Pancreas (tissue), 10 donors: ENCODE measurements at regions of chr20 and their contacts with region 1.

Region 1: DNA sequence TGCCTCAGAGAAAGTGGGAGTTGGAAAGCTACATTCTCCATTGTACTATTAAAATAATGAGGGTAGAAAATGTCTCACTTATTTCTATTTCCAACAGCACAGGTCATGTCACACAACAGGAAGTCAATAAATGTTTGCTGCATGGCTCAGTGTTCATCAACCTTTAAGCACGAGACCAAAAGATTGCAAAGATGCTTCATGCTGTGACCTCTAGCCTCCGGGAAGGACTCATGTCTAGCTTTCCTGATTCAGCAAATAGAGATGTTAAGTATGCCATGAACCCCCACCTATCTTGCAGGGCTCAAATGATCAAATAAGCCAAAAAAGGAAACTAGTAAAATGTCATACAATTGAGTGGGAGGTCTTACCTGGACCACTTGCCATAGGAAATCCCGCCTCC is 57.4 kb downstream of the NCOA6 start:
- DNase-seq: no peak
- ATAC-seq: no peak
- H3K4me3 ChIP-seq: no peak overlapping the region
- H3K27ac ChIP-seq: no peak overlapping the region
- H3K4me1 ChIP-seq: no peaks in the 10 kb centered on the region
- H3K27me3 ChIP-seq: no peaks in the 10 kb centered on the region
- CTCF ChIP-seq: no peak

Region 2: GRCh38 chr20:34312544-34313217 is 455.4 kb before region 1 on chr20:
- intact Hi-C with region 1: loop called in 1 of 3 experiments (anchors 5 kb)
- DNase-seq: peak; percentile 80 to 92 (median 87)
- ATAC-seq: peak; percentile 94 to 98 (median 96)
- H3K4me3 ChIP-seq: peak overlapping the region in 1 of 4 donors; percentile 29
- H3K27ac ChIP-seq: no peak overlapping the region
- H3K4me1 ChIP-seq: peaks cover 9 to 21% (median 14%) of the 10 kb centered on the region in 3 donors
- H3K27me3 ChIP-seq: no peaks in the 10 kb centered on the region
- CTCF ChIP-seq: peak; percentile 93 to 99 (median 98)

Region 3: GRCh38 chr20:34538671-34539123 is 229.4 kb before region 1 on chr20:
- intact Hi-C with region 1: loop called in 1 of 3 experiments (anchors 10 kb)
- DNase-seq: peak in 5 of 6 donors; percentile 24 to 77 (median 58)
- ATAC-seq: peak; percentile 67 to 88 (median 82)
- H3K4me3 ChIP-seq: no peak overlapping the region
- H3K27ac ChIP-seq: no peak overlapping the region
- H3K4me1 ChIP-seq: no peaks in the 10 kb centered on the region
- H3K27me3 ChIP-seq: no peaks in the 10 kb centered on the region
- CTCF ChIP-seq: peak; percentile 58 to 78 (median 68)